WTC11 (cell line): ENCODE measurements at regions of chr2 and their contacts with region 1.

Region 1: DNA sequence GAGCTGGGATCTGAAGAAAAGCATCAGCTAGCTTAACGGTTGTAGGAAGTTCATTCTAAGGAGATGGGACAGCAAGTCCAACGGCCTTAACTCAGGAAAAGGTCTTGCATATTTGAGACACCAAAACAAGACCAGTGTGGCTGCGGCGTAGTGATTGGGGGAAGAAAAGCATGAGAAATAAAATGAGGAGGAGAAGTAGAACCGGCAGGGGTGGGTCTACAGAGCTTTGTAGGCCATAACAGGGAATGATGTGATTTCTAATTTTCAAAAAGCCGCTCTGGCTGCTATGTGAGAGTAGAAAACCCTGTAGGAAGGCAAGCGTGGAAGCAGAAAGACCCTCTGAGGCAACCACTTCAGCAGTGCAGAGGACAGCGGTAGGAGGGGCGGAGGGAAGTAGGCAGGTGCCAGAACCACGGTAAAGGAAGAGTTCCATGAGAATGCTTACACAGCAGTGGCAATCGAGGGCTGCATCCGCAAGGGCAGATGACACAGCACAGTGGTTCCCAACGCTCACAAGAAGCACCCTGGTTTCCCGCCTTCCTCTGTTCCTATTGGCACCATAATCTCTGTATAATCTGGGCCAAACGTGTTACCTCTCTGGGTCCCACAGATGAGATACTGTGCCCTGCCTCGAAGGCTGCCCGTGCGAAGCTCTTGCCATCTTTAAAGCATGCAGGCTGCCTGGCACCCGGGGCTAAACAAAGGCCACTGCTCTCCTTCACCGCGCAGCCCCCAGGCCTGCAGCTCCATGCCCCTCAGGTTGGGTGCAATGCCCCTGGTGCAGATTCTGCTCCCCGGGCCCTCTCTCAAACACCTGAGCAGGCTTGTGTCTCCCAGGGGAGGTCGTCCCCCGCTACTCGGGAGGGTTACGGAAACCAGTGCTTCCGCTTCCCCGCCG is 791 bp downstream of the ANKRD39 start:
- DNase-seq: no peak
- ATAC-seq: peak; percentile 4; the same call in 1 of the 2 replicates
- H3K4me3 Mint-ChIP-seq: peak overlapping the region; percentile 80
- H3K27ac Mint-ChIP-seq: no peak overlapping the region
- H3K4me1 Mint-ChIP-seq: peaks cover 21% of the 10 kb centered on the region
- H3K27me3 Mint-ChIP-seq: no peaks in the 10 kb centered on the region
- CTCF ChIP-seq: no peak

Region 2: DNA sequence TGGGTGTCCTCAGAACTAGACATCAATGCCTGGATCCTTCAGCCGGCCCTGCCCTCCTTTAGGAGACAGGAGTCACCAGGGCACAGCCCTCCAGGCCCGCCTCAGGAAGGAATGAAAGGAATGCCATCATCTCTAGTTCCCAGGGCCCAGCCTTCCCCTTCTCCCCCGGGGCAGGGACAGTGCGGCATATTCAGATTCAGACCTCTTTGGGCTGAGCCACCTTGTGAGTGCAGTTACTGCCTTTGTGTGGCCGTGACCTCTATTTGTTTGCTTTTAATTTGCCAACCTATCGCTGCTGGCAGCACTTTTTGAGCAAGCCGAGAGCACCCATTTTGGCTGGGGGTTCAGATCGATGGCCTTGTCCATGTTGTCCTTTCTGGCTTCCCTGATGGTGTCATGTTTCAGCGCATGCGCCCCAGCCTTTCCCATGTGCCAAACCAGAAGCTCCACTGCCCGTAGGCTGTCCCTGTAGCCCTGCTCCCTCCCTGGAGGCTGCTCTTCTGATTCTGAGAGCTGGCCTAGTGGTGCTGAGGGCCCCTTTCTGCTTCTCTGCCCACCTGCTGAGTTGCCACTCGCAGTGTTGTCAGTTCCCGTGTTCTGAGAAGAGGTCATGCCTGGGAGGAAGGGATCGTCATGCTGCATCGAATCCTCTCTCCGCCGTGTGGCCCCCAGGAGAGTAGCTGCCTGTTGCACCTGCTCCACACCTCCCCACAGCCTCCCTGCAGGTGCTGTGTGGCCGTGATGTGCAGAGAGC is 24.1 kb before region 1 on chr2:
- CTCF ChIA-PET with region 1: interaction called, 32 read pairs
- POLR2A ChIA-PET with region 1: no interaction called
- DNase-seq: peak; percentile 77
- ATAC-seq: peak; percentile 94
- H3K4me3 Mint-ChIP-seq: peak overlapping the region; percentile 64
- H3K27ac Mint-ChIP-seq: peak overlapping the region; percentile 98
- H3K4me1 Mint-ChIP-seq: peaks cover 27% of the 10 kb centered on the region
- H3K27me3 Mint-ChIP-seq: no peaks in the 10 kb centered on the region
- CTCF ChIP-seq: no peak

Region 3: DNA sequence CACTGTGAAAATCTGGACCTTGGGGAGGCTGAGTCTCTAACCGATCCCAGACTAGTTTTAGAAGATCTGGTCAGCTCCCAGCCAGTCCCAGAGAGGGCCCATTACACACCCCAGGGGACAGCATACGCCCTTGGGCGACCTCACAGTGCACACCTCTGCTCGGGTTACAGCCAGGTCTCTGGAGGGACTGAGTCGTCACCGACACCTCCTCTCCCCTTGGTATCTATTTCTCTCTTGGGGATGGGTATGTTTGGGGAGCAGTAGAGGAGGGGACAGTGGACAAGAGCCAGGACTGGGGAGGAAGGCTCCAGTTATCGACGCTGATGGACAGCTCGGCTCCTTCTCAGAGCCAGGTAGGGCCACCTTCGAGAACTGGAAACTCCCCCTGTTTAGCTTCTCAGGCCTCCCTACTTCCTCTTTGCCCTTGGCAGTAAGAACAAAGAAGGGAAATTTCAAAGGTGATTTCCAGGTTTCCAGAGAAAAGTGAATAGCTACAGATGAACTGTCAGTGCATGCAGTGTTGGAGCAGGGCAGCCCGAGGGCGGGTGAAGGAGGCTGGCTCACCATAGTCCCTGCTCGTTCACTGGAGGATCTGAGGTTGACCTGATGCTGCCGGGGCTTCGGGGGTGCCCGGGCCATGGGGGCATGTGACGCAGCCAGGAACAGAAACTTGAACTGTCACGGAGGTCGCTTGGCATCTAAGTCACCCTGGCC is 17.2 kb after region 1 on chr2:
- CTCF ChIA-PET with region 1: interaction called, 63 read pairs
- POLR2A ChIA-PET with region 1: interaction called, 20 read pairs
- DNase-seq: no peak
- ATAC-seq: no peak
- H3K4me3 Mint-ChIP-seq: no peak overlapping the region
- H3K27ac Mint-ChIP-seq: no peak overlapping the region
- H3K4me1 Mint-ChIP-seq: peaks cover 70% of the 10 kb centered on the region
- H3K27me3 Mint-ChIP-seq: 0 out of 2 replicates have a peak, but pooled peaks cover 4% of the 10 kb centered on the region
- CTCF ChIP-seq: no peak

Region 4: DNA sequence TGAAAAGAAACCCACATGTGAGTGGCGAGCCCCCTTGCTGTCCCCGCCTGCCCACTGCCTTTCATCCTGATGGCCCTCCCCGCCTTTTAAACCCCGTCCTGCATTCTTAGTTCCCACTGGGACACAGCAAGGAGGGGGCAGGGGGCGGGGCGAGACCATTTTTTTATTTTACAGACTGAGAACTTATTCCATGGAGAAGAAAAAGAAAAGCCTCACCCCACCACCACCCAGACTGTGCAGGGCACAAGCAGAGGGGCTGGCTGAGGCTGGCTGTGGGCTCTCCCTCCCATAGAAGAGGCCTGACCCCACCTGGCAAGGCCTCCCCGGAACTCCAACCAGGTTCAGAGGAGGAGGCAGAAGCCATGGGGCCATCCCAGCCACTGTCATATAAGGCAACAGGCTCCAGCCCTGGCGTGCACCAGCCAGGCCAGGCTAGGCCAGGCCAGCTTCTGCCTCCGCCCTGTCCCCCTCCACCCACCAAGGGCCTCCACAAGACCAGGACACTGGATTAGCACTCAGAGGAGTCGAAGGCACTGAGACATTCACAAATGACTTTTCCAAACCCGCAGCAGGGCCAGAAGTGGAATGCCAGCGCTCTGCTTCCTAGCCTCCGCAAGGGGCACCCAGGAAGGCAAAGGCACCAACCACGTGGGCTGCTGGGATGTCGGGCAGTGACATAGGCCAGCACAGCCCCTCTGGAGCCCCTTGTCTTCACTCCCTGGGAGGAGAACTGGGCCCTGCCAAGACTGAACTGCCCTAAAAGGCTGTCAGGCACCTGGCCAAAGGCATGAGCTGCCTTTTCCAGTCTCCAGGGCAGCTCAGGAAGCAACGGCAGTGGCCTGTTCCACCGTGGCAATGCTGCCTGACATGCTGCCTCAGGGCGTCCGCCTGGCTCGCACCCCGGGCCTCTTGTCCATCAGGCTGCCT is 50.4 kb after region 1 on chr2:
- CTCF ChIA-PET with region 1: interaction called, 56 read pairs
- POLR2A ChIA-PET with region 1: interaction called, 4 read pairs
- DNase-seq: peak; percentile 71
- ATAC-seq: peak; percentile 91
- H3K4me3 Mint-ChIP-seq: peak overlapping the region; percentile 8; the same call in 1 of the 2 replicates
- H3K27ac Mint-ChIP-seq: 0 out of 2 replicates have a peak overlapping the region, but pooled peaks have one; percentile 11
- H3K4me1 Mint-ChIP-seq: peaks cover 32% of the 10 kb centered on the region
- H3K27me3 Mint-ChIP-seq: peaks cover 14% of the 10 kb centered on the region
- CTCF ChIP-seq: no peak

Region 5: GRCh38 chr2:96940001-96940615 is 83.1 kb after region 1 on chr2:
- CTCF ChIA-PET with region 1: interaction called, 13 read pairs
- POLR2A ChIA-PET with region 1: no interaction called
- DNase-seq: no peak
- ATAC-seq: no peak
- H3K4me3 Mint-ChIP-seq: no peak overlapping the region
- H3K27ac Mint-ChIP-seq: no peak overlapping the region
- H3K4me1 Mint-ChIP-seq: peaks cover 4% of the 10 kb centered on the region
- H3K27me3 Mint-ChIP-seq: no peaks in the 10 kb centered on the region
- CTCF ChIP-seq: no peak

Region 6: GRCh38 chr2:96970248-96970875 is 113.3 kb after region 1 on chr2:
- CTCF ChIA-PET with region 1: interaction called, 11 read pairs
- POLR2A ChIA-PET with region 1: no interaction called
- DNase-seq: no peak
- ATAC-seq: no peak
- H3K4me3 Mint-ChIP-seq: no peak overlapping the region
- H3K27ac Mint-ChIP-seq: no peak overlapping the region
- H3K4me1 Mint-ChIP-seq: peaks cover 3% of the 10 kb centered on the region
- H3K27me3 Mint-ChIP-seq: no peaks in the 10 kb centered on the region; the same call in 1 of the 2 replicates
- CTCF ChIP-seq: no peak